ENCODE measurements at regions of chr2 and their contacts with region 1.

Region 1: DNA sequence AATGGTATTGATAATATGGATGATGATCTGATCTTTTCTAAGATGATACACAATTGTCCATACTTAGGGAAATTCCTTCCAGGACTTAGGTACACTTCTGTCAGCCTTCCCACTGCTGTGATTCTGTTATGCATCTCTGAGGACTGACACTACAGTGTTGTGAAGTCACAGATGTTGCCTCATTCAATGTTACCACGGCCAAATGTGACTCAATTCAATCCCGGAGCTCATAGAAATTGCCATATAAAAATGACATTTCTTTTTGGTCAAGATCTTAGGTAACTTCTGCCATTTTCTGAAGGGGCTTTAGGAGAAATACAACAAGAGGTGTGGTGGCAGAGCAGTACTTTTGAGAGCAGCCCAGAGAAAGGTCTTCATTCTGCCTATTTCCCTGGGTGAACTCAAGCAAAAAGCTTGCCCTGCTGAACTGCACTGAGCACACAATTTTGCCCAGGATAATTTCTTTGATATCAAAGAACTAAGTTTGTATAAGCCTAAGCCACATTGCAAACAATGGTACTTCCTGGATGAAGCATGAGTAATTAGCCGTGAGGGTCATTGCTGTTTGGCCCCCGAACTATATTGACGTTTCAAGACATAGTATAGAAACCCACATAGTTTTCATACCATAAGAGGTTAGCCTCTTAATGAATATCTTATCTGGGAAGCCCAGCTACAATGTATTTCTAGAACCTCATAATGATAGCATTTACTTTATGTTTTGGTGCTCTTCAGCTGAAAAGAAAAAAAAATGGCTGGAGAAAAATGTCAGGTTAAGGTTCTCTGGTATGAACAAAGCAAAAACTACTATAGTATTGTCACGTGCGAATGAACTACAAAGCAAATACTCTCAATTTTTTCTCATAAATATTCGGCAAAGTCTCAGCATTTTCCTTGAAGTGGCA is 437.4 kb downstream of the MEIS1 start:
- DNase-seq: no peak
- H3K4me3 ChIP-seq: no peak overlapping the region
- H3K27ac ChIP-seq: peak overlapping the region; percentile 94
- H3K4me1 ChIP-seq: peaks cover 60% of the 10 kb centered on the region
- H3K27me3 ChIP-seq: no peaks in the 10 kb centered on the region
- CTCF ChIP-seq: no peak

Region 2: GRCh38 chr2:65638443-65638842 is 1233.9 kb before region 1 on chr2:
- CTCF ChIA-PET with region 1: no interaction called
- POLR2A ChIA-PET with region 1: no interaction called
- intact Hi-C with region 1: loop called (anchors 5 kb)
- DNase-seq: peak; percentile 77
- H3K4me3 ChIP-seq: no peak overlapping the region
- H3K27ac ChIP-seq: peak overlapping the region; percentile 84
- H3K4me1 ChIP-seq: peaks cover 60% of the 10 kb centered on the region
- H3K27me3 ChIP-seq: no peaks in the 10 kb centered on the region
- CTCF ChIP-seq: peak; percentile 46

Region 3: GRCh38 chr2:65799141-65799854 is 1073.0 kb before region 1 on chr2:
- CTCF ChIA-PET with region 1: no interaction called
- POLR2A ChIA-PET with region 1: no interaction called
- intact Hi-C with region 1: loop called (anchors 5 kb)
- DNase-seq: no peak
- H3K4me3 ChIP-seq: no peak overlapping the region
- H3K27ac ChIP-seq: peak overlapping the region; percentile 12
- H3K4me1 ChIP-seq: peaks cover 43% of the 10 kb centered on the region
- H3K27me3 ChIP-seq: no peaks in the 10 kb centered on the region
- CTCF ChIP-seq: no peak

Region 4: DNA sequence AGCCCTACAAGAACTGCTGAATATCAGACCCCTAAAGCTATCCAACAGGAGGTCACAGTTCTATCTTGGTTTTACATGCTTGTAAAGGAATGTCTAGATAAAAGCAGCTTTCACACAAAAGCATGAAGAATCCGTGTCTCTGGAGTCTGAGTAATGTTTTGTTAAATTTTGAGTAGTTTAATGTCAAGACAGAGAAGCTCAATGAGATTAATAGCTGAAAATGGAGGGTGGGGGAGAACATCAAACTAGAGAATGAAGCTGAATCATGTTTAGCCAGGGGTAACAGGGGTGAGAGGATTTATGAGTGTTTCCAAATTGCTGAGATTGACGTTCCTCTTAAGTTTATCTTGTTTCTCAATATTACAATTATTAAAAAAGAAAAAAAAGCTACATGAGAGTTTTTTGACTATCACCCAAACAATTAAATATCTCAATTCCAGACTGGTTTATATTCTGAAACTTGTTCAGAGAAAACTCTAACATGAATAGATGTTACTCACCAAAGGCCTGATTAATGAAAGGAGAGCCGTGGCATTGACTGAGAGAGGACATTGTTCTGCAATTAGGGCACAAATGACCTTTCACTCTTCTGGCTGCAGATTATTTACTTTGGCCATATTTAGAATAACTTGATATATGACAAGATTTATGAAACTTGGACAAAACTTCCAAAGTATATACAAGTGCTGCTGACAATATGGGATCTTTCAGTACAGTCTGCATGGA is 258.4 kb after region 1 on chr2:
- CTCF ChIA-PET with region 1: no interaction called
- POLR2A ChIA-PET with region 1: no interaction called
- intact Hi-C with region 1: loop called (anchors 10 kb)
- DNase-seq: no peak
- H3K4me3 ChIP-seq: no peak overlapping the region
- H3K27ac ChIP-seq: no peak overlapping the region
- H3K4me1 ChIP-seq: peaks cover 19% of the 10 kb centered on the region
- H3K27me3 ChIP-seq: no peaks in the 10 kb centered on the region
- CTCF ChIP-seq: no peak

Region 5: DNA sequence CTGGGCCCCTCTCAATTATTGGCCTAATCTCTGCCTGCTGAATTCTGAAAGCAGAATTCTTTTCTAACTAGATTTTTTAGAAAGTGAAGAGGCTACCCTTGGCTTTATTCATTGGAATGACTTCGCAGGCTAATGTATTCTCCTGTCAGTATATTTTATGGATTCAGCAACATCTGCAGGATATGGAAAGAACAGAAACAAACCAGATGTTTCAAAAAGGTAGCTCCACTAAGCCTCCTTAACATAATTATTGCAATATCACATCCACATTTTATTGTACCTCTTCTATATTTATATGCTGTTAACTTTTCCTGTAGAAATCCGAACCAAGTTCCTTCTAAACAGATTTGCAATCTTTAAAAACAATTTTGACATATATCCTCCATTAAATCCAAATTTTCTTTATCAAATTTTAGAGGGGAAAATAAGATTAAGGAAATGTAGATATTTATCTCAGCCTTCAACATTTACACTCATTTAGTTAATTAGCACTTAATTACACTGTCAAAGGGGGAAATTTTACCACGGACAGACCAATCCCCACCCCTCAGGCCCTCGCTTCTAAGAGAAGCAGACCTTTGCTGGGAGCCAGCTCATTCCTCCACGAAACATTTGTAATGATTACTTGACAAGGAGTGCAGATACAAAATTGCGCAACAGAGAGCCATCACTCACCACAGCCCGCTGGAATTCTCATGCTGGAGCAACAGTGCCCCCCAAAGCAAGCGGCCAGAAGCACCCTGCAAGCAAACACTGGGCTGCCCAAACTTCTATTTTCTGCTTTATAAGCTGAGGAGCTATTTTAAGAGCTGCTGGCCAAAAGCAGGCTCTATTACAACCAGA is 778.2 kb after region 1 on chr2:
- CTCF ChIA-PET with region 1: no interaction called
- POLR2A ChIA-PET with region 1: no interaction called
- intact Hi-C with region 1: loop called (anchors 2 kb)
- DNase-seq: peak; percentile 96
- H3K4me3 ChIP-seq: peak overlapping the region; percentile 21
- H3K27ac ChIP-seq: peak overlapping the region; percentile 70
- H3K4me1 ChIP-seq: peaks cover 26% of the 10 kb centered on the region
- H3K27me3 ChIP-seq: no peaks in the 10 kb centered on the region
- CTCF ChIP-seq: peak; percentile 89

Measured in A673 (cell line).